ENCODE measurements at regions of chr2 and their contacts with region 1.

Region 1: DNA sequence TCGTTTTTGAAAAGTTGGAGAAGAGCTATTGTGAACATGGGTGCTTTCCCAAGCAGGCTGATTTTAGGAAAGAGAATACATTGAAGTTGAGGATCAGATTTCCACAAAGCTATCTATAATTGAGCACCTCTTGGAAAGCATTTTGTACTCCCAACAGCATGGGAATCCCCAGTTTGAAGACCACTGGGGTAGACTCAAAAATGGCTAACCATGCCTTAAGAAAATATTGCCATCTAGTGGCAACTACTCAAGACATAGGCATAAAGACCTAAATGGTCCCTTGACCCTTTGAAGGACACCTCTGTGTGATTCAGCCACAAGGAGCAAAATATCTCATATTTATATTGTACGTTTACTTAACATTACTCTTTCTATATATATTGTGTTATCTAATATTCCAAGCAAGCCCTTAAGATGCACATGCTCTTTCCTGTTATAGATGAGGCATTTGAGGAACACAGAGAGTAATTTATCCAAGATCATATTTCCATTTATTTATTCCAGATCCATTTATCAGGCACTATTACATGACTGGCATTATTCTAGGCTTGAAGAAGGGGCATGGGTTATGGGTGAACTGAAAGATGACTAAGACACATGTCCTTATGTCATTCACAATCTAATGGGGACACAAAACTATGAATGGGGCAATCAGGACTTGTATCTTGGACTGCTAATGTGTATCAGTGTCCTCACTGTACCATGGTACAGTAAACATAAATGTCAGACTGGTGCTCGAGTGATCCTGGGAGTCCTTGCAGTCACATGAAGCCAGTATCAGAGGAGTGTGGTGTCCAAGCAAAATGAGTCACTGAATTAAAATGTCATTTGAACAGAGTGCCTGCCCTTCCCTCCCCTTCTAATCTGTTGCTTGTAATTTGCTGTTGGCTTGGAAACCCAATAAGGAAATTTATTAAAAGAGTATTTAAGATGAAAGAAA is 121.0 kb upstream of the XPO1 start:
- DNase-seq: peak in 1 of 2 donors; percentile 32
- ATAC-seq: peak; percentile 73 to 93 (median 91)
- H3K4me3 ChIP-seq: no peak overlapping the region
- H3K27ac ChIP-seq: peak overlapping the region; percentile 78 to 90 (median 84)
- H3K4me1 ChIP-seq: peaks cover 0 to 31% (median 17%) of the 10 kb centered on the region in 9 donors
- H3K27me3 ChIP-seq: no peaks in the 10 kb centered on the region
- CTCF ChIP-seq: peak; percentile 20 to 67 (median 48)

Region 2: GRCh38 chr2:61714210-61714609 is 55.1 kb after region 1 on chr2:
- intact Hi-C with region 1: loop called in 1 of 10 experiments (anchors 2 kb)
- DNase-seq: peak; percentile 22 to 25
- ATAC-seq: peak in 7 of 8 donors; percentile 72 to 92 (median 83)
- H3K4me3 ChIP-seq: no peak overlapping the region
- H3K27ac ChIP-seq: peak overlapping the region in 9 of 10 donors; percentile 39 to 69 (median 59)
- H3K4me1 ChIP-seq: peaks cover 0 to 26% (median 0%) of the 10 kb centered on the region in 9 donors
- H3K27me3 ChIP-seq: no peaks in the 10 kb centered on the region
- CTCF ChIP-seq: no peak

Region 3: GRCh38 chr2:61816480-61817355 is 157.6 kb after region 1 on chr2:
- intact Hi-C with region 1: no loop called
- DNase-seq: peak in 1 of 2 donors; percentile 17
- ATAC-seq: peak; percentile 52 to 82 (median 70)
- H3K4me3 ChIP-seq: no peak overlapping the region
- H3K27ac ChIP-seq: peak overlapping the region in 4 of 10 donors; percentile 18 to 57 (median 20)
- H3K4me1 ChIP-seq: peaks cover 0 to 6% (median 0%) of the 10 kb centered on the region in 9 donors
- H3K27me3 ChIP-seq: peaks cover 0 to 4% (median 0%) of the 10 kb centered on the region in 7 donors
- CTCF ChIP-seq: no peak

Measured in heart right ventricle (tissue), 16 donors.